Calu3 (cell line): ENCODE measurements at regions of chr1 and their contacts with region 1.

Region 1: GRCh38 chr1:198157241-198157846 is 546 bp downstream of the NEK7 start:
- DNase-seq: peak; percentile 86
- H3K4me3 Mint-ChIP-seq: peak overlapping the region; percentile 87
- H3K27ac Mint-ChIP-seq: peak overlapping the region; percentile 81
- H3K4me1 Mint-ChIP-seq: peaks cover 51% of the 10 kb centered on the region
- H3K27me3 Mint-ChIP-seq: no peaks in the 10 kb centered on the region
- CTCF ChIP-seq: no peak

Region 2: DNA sequence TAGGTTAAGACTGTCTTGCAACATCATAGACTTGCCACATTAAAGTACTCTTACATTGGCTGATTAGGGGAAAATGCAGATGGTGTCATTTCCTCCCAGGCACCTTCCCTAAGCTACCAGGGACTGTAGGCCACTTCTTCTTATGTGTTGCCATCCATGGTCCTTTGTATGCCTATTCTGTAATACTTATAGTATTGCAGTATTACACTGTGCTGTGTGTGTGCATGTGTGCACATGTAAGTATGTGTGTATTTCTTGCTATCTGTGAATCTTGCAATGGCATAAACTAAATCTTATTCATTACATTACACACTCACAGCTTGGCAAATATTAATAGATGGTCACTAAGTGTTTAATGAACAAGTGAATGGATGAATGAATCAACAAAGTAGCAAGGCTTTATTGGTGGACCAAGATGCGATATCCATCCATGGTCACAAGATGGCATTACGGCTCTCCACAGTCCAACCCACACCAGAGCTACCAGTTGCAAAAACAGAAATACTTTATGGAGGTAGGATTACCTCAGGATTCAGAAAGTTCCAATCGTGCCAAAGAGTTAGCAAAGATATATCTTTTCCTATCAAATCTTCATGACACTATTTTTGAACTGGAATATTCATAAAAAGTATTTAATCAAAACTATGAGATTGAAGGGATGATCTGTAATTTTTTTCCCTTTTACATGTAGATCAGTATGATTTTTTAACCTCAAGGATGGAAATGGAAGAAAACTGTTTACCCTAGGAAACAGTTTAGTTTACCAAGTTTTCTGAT is 542.2 kb before region 1 on chr1:
- CTCF ChIA-PET with region 1: no interaction called
- intact Hi-C with region 1: loop called (anchors 10 kb)
- DNase-seq: peak; percentile 48
- H3K4me3 Mint-ChIP-seq: no peak overlapping the region
- H3K27ac Mint-ChIP-seq: no peak overlapping the region
- H3K4me1 Mint-ChIP-seq: no peaks in the 10 kb centered on the region
- H3K27me3 Mint-ChIP-seq: no peaks in the 10 kb centered on the region
- CTCF ChIP-seq: peak; percentile 46

Region 3: DNA sequence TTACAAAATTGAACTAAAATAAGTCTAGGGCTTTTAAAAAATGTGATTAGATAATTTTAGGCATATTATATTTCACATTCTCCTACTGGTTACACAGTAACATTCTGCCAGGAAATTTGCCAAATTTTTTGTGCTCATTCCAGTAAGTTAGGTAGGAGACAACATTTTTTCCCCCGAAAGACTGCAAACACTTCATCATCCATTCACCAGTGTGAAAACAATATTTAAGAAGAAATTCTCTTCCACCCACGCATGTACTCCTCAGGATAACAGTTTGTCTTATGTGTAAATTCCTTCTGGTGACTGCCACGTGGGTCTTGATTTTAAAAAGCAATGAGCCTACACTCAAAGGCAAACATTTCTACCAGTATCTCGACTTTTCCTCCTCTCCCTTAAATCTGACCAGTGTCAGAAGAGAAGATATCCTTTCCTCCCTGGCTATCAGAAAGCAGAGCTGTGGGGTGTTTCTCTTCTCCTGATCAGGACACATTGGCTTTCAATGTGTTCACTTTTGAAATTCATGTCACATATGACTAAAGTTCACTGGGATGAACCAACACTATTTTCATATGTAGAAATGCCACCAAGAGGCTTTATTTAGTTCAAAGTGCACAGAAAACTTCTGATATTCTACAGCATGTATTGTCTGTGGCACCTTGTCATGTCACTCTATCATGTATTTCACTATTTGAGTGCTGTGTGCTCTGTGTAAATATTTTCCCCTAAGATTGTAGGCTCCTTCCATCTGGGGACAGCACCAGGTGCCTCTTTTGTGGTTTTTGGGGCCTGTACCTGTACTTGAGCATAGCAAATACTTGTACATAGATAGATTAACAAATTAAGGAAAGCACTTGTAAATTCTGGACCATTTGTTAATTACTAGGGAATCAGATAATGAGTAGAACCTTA is 201.6 kb before region 1 on chr1:
- CTCF ChIA-PET with region 1: no interaction called
- intact Hi-C with region 1: loop called (anchors 2 kb)
- DNase-seq: peak; percentile 38
- H3K4me3 Mint-ChIP-seq: peak overlapping the region; percentile 49
- H3K27ac Mint-ChIP-seq: peak overlapping the region; percentile 88
- H3K4me1 Mint-ChIP-seq: peaks cover 87% of the 10 kb centered on the region
- H3K27me3 Mint-ChIP-seq: no peaks in the 10 kb centered on the region
- CTCF ChIP-seq: no peak

Region 4: GRCh38 chr1:198042168-198042567 is 115.2 kb before region 1 on chr1:
- CTCF ChIA-PET with region 1: no interaction called
- intact Hi-C with region 1: no loop called
- DNase-seq: no peak
- H3K4me3 Mint-ChIP-seq: no peak overlapping the region
- H3K27ac Mint-ChIP-seq: no peak overlapping the region
- H3K4me1 Mint-ChIP-seq: no peaks in the 10 kb centered on the region
- H3K27me3 Mint-ChIP-seq: no peaks in the 10 kb centered on the region
- CTCF ChIP-seq: no peak

Region 5: GRCh38 chr1:198088360-198089071 is 68.8 kb before region 1 on chr1:
- CTCF ChIA-PET with region 1: interaction called, 15 read pairs
- intact Hi-C with region 1: loop called (anchors 1 kb)
- DNase-seq: peak; percentile 47
- H3K4me3 Mint-ChIP-seq: peak overlapping the region; percentile 63
- H3K27ac Mint-ChIP-seq: peak overlapping the region; percentile 87
- H3K4me1 Mint-ChIP-seq: peaks cover 49% of the 10 kb centered on the region
- H3K27me3 Mint-ChIP-seq: no peaks in the 10 kb centered on the region
- CTCF ChIP-seq: peak; percentile 68

Region 6: GRCh38 chr1:198265073-198265661 is 107.8 kb after region 1 on chr1:
- CTCF ChIA-PET with region 1: no interaction called
- intact Hi-C with region 1: loop called (anchors 5 kb)
- DNase-seq: no peak
- H3K4me3 Mint-ChIP-seq: no peak overlapping the region
- H3K27ac Mint-ChIP-seq: peak overlapping the region; percentile 27
- H3K4me1 Mint-ChIP-seq: peaks cover 27% of the 10 kb centered on the region
- H3K27me3 Mint-ChIP-seq: no peaks in the 10 kb centered on the region
- CTCF ChIP-seq: no peak

Region 7: DNA sequence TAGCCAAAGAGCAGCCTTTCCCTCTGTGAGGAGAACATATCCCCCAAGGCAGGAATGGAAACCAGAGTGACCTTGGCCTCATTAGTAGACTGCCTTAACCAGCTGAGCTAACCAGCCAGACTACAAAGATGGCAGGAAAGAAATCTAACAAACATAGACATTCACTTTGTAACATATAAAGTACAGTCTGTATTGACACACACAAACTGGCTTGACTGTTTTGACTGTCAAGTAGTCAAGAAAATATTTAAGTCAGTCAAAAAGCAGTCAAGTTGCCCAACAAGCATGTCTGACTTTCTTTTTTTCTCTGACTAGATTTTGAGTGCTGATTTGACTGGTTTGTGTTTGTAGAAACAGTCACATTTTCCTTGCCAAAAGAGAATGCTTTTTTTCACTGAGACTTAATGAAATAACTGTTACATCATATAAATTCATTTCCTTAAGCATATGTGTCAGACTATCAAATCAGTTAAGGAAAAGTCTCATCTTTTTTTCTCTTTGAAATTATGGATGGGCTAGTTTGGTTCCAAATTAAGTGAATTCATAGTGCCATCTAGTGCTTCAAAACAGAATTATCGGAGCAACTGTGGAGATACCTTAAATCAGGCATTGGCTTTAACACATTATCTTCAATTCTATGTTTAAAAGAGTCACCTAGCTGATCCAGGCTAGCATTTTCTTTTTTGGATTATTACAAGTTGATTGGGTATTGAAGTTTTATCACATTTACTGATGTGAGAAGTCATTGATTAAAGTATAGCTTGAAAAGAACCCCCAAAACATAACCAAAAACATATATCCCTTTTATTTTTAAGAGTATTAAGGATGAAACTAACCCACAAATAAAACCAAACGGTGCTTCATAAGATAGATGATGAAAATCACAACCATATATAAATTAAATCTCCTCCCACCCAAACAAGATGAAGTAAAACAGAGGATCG is 308.1 kb after region 1 on chr1:
- CTCF ChIA-PET with region 1: interaction called, 3 read pairs
- intact Hi-C with region 1: loop called (anchors 1 kb)
- DNase-seq: no peak
- H3K4me3 Mint-ChIP-seq: no peak overlapping the region
- H3K27ac Mint-ChIP-seq: peak overlapping the region; percentile 35
- H3K4me1 Mint-ChIP-seq: peaks cover 17% of the 10 kb centered on the region
- H3K27me3 Mint-ChIP-seq: no peaks in the 10 kb centered on the region
- CTCF ChIP-seq: peak; percentile 61

Region 8: DNA sequence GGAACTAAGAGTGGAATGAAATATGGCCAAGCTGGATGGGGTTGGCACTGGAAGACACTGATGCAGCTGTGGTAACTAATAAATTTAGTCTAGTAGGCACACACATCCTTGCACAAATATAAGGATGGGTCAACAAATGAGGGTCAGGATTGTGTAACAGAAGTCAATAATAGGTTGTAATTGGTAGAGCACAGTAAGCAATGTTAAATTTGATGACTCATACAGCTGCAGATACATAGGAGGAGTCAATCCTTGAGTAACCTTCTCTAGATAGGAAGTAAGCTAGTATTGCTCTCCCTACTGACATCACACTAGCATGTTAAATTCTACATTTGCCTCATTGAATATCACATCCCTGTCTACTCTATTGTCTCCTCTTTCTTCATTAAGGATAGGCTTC is 813.6 kb after region 1 on chr1:
- CTCF ChIA-PET with region 1: no interaction called
- intact Hi-C with region 1: no loop called
- DNase-seq: no peak
- H3K4me3 Mint-ChIP-seq: no peak overlapping the region
- H3K27ac Mint-ChIP-seq: no peak overlapping the region
- H3K4me1 Mint-ChIP-seq: peaks cover 14% of the 10 kb centered on the region
- H3K27me3 Mint-ChIP-seq: no peaks in the 10 kb centered on the region
- CTCF ChIP-seq: no peak